ENCODE measurements at regions of chr21 and their contacts with region 1.

Region 1: DNA sequence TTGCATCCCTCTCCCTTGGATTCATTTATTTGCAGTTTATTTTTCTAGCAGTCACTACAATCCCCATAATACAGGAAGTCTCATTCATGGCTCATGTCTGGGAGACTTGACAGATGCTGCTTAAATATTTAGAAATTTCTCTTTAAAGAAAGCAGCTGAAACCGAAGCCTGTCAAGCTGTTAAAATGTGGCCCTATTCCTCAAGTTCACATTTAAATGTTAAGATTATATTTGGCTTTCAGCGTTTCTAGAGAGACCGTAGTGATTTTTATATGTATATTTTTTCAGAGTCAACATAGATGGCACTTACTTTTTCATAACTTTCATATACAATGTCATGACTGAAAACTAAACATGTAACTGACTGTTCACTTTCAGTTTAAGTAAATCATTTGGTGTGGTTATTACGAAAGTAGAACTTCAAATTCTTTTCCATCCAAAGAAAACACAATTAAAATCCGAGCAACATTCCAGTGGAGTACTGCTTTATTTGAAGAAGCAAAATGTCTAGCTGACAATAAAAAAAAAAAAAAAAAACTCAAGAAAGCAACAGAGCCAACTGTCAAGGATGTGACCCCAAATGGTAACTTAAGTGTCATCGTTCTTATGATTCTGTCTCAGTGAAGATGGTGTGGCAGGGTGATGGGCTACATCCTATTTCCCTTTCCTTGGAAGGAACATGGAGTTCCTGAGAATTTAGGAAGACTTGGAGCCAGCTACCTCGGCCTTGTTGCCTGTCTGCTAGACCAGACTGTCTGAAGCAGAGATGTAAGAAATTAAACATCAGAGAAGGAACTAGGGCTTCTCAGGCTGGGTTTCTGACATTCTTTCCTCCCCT is 37.8 kb downstream of the MIS18A start:
- DNase-seq: no peak
- H3K4me3 Mint-ChIP-seq: no peak overlapping the region
- H3K27ac Mint-ChIP-seq: no peak overlapping the region
- H3K4me1 Mint-ChIP-seq: peaks cover 9% of the 10 kb centered on the region
- H3K27me3 Mint-ChIP-seq: peaks cover 17% of the 10 kb centered on the region

Region 2: GRCh38 chr21:32278518-32279376 is 37.7 kb after region 1 on chr21 and contains the start of gene MIS18A:
- intact Hi-C with region 1: loop called (anchors 1 kb)
- DNase-seq: peak; percentile 99
- H3K4me3 Mint-ChIP-seq: peak within 1 kb of the TSS; percentile 100
- H3K27ac Mint-ChIP-seq: peak within 1 kb of the TSS; percentile 98
- H3K4me1 Mint-ChIP-seq: peaks cover 32% of the 10 kb centered on the region
- H3K27me3 Mint-ChIP-seq: peaks cover 3% of the 10 kb centered on the region
- total RNA-seq, gene MIS18A: 27.8 and 31.3 TPM in 2 replicates

Region 3: DNA sequence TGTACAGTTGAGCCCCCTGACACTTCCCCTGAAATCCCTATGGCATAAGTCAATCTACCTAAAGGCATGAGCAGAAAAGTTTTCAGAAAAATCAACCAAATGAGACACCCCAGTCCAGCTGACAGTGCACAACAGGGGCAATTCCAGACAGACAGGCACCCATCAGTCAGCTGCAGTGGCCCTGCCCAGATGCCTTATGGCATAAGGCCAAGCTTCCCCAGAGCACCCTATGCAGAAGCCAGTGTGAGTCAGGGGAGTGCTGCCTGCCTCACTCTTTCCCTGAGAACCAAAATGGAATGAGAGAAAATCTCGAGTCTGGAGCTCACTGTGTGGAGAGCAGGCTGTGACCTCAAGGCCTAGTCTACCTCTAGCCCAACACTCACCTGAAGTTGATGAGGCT is 95.6 kb after region 1 on chr21:
- intact Hi-C with region 1: no loop called
- DNase-seq: no peak
- H3K4me3 Mint-ChIP-seq: no peak overlapping the region
- H3K27ac Mint-ChIP-seq: no peak overlapping the region
- H3K4me1 Mint-ChIP-seq: no peaks in the 10 kb centered on the region
- H3K27me3 Mint-ChIP-seq: no peaks in the 10 kb centered on the region

Region 4: GRCh38 chr21:32403201-32403777 is 162.2 kb after region 1 on chr21:
- intact Hi-C with region 1: no loop called
- DNase-seq: peak; percentile 88
- H3K4me3 Mint-ChIP-seq: no peak overlapping the region
- H3K27ac Mint-ChIP-seq: no peak overlapping the region
- H3K4me1 Mint-ChIP-seq: peaks cover 7% of the 10 kb centered on the region
- H3K27me3 Mint-ChIP-seq: peaks cover 18% of the 10 kb centered on the region

Measured in activated CD4-positive, alpha-beta T cell treated with anti-CD3 and anti-CD28 coated beads, Interleukin-2, amount 10 ng/mL, durations not matched to agents 24 days and 14 days (primary cell).